Esophagus squamous epithelium (tissue), 5 donors: ENCODE measurements at regions of chr6 and their contacts with region 1.

Region 1: DNA sequence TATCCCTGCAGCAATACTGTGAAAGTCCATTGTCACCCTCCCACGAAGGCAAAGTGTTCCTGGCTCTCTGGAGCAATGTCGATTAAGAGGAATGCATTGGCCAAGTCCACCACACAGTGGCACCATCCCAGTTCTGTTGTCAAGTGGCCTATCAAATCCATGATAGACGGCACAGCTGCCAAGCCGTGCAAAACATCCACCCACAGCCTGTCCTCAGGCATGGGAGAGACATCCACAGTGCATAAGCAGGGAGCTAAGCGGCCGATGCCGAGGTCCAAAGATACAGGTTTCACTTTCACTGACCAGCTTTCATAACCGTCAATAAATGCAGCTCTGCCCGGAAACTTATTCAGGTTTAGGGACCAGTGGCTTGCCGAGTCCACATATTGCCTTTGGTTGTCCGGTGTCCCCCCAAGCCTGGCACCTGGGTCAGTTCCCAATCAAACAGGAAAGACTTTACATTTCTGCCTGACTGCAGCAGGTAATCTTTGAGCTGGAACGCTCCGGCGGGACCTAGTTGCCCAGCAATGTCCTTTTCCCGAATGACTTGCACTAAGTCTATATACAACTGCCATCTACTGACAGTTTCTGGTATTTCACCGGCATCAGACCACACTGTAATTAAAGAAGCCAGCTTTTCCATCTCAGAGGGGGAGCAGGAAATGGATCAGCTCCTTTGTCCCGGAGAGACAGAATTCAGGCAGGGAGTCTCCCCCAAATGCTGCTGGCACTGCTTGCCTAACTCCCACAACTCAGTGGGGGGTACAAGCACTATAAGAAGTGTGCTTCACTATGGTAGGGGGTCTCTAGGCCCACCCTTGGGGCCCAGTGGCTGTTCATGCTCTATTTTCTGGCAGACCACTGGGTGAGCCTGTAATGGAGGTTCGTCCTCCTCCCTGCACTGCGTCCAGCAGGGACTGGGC is 6.3 kb downstream of the ZKSCAN3 start:
- DNase-seq: no peak
- H3K4me3 ChIP-seq: peak overlapping the region; percentile 41 to 79 (median 62)
- H3K27ac ChIP-seq: peak overlapping the region; percentile 84 to 92 (median 86)
- H3K4me1 ChIP-seq: peaks cover 26 to 58% (median 30%) of the 10 kb centered on the region in 3 donors
- H3K27me3 ChIP-seq: no peaks in the 10 kb centered on the region
- CTCF ChIP-seq: peak; percentile 67 to 93 (median 86)
- POLR2A ChIP-seq: no peak

Region 2: GRCh38 chr6:27605401-27606342 is 750.3 kb before region 1 on chr6:
- intact Hi-C with region 1: no loop called
- DNase-seq: no peak
- H3K4me3 ChIP-seq: peak overlapping the region in 1 of 4 donors; percentile 33
- H3K27ac ChIP-seq: no peak overlapping the region
- H3K4me1 ChIP-seq: peaks cover 0 to 21% (median 0%) of the 10 kb centered on the region in 3 donors
- H3K27me3 ChIP-seq: peaks cover 0 to 86% (median 10%) of the 10 kb centered on the region in 4 donors
- CTCF ChIP-seq: no peak
- POLR2A ChIP-seq: no peak

Region 3: GRCh38 chr6:28136585-28137504 is 219.2 kb before region 1 on chr6:
- intact Hi-C with region 1: loop called (anchors 10 kb)
- DNase-seq: peak; percentile 38
- H3K4me3 ChIP-seq: peak overlapping the region; percentile 58 to 88 (median 72)
- H3K27ac ChIP-seq: peak overlapping the region; percentile 82 to 95 (median 90)
- H3K4me1 ChIP-seq: peaks cover 6 to 48% (median 17%) of the 10 kb centered on the region in 3 donors
- H3K27me3 ChIP-seq: no peaks in the 10 kb centered on the region
- CTCF ChIP-seq: peak in 1 of 6 experiments; percentile 21
- POLR2A ChIP-seq: peak in 2 of 4 donors; percentile 28 to 41